HCT116 (cell line): ENCODE measurements at regions of chr5 and their contacts with region 1.

Region 1: GRCh38 chr5:134184155-134185135 is 7.7 kb upstream of the SKP1 start:
- DNase-seq: peak; percentile 48
- ATAC-seq: peak; percentile 98
- H3K4me3 ChIP-seq: no peak overlapping the region
- H3K27ac ChIP-seq: no peak overlapping the region
- H3K4me1 ChIP-seq: no peaks in the 10 kb centered on the region
- H3K27me3 ChIP-seq: no peaks in the 10 kb centered on the region
- CTCF ChIP-seq: peak in 2 of 3 experiments; percentile 88 to 93; a peak in 4 of 6 replicates
- POLR2A ChIP-seq: no peak
- RAD21 ChIP-seq: no peak

Region 2: DNA sequence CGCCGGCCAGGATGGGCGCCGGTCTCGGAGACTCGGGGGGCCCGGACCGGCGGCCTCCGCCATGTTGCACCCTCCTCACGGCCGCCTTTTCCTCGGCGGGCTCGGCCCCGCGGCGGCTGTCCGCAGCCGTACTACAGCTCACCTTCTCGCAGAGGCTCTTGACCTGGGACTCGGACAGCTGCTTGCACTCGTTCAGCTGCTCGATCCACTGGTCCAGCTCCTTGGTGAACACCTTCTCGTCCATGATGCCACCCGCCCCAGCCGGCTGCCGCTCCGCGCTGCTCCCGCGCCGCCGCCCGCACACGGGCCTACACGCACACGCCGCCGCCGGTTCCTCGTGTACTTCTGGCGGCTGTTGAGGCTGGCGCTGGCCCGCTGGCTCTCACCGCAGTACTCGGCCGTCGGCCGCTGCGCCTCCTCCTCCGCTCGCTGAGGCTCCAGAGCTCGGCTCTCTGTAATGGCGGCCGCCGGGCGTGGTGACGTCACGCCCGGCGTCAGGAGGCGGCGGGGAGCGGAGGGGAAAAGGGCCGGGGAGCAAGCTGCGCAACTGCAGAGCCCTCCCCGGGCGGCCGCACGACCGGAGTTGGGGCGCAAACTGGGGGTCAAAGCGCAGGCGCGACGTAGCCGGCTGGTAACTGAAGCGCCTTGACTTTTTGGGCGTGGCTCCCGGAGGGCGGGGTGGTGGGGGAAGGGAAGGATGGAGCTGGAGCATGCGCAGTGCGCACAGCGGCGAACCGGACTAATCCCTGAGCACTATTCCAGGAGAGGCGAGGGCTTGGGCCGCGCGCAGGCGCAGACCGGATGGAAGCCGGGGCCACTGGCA is 41.4 kb after region 1 on chr5 and contains the start of gene PPP2CA:
- CTCF ChIA-PET with region 1: no interaction called
- POLR2A ChIA-PET with region 1: no interaction called
- RAD21 ChIA-PET with region 1: no interaction called
- intact Hi-C with region 1: loop called (anchors 5 kb)
- DNase-seq: peak; percentile 97
- ATAC-seq: peak; percentile 87
- H3K4me3 ChIP-seq: peak within 1 kb of the TSS; percentile 83 to 95
- H3K27ac ChIP-seq: peak within 1 kb of the TSS; percentile 98
- H3K4me1 ChIP-seq: peaks cover 9 to 32% of the 10 kb centered on the region in 2 experiments
- H3K27me3 ChIP-seq: no peaks in the 10 kb centered on the region
- CTCF ChIP-seq: no peak
- POLR2A ChIP-seq: peak; percentile 46
- RAD21 ChIP-seq: no peak
- total RNA-seq, gene PPP2CA: 167 TPM

Region 3: DNA sequence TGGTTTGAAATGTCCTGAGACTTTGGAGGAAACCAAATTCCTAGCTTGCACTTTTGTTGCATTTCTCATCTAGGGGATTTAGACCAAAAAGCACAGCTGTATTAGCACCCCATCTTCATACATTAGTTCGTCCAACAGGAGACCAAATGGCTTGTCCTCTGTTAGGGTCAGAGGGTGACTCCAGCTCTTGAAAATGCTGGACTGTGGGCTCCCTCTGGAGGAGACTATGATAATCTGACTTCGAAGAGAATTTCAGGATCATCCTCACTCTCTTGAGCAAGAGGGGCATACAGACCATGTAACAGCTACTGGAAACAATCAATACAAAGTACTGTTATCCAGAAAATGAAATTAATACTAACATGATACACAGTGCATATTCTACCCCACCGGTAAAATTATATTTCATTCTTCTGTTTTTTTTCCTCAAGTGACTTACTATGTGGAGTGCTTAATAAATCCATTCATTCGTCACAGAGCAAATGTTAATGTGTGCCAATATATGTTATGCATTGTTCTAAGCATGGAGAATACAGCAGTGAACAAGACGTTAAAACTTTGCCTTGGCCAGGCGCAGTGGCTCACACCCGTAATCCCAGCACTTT is 105.2 kb after region 1 on chr5:
- CTCF ChIA-PET with region 1: interaction called, 25 read pairs
- POLR2A ChIA-PET with region 1: interaction called, 3 read pairs
- RAD21 ChIA-PET with region 1: interaction called, 7 to 9 read pairs
- intact Hi-C with region 1: loop called (anchors 1 kb)
- DNase-seq: peak; percentile 83
- ATAC-seq: peak; percentile 99
- H3K4me3 ChIP-seq: no peak overlapping the region
- H3K27ac ChIP-seq: no peak overlapping the region
- H3K4me1 ChIP-seq: no peaks in the 10 kb centered on the region
- H3K27me3 ChIP-seq: no peaks in the 10 kb centered on the region
- CTCF ChIP-seq: peak; percentile 53 to 97 (median 78)
- POLR2A ChIP-seq: no peak
- RAD21 ChIP-seq: peak; percentile 99